ENCODE measurements at regions of chrX and their contacts with region 1.

Region 1: GRCh38 chrX:40108959-40109287 is 11.2 kb upstream of the BCOR start:
- DNase-seq: no peak
- H3K4me3 ChIP-seq: peak overlapping the region; percentile 45 to 64
- H3K27ac ChIP-seq: peak overlapping the region; percentile 71
- H3K4me1 ChIP-seq: peaks cover 35% of the 10 kb centered on the region
- H3K27me3 ChIP-seq: no peaks in the 10 kb centered on the region
- CTCF ChIP-seq: no peak
- POLR2A ChIP-seq: peak in 1 of 2 donors; percentile 3

Region 2: DNA sequence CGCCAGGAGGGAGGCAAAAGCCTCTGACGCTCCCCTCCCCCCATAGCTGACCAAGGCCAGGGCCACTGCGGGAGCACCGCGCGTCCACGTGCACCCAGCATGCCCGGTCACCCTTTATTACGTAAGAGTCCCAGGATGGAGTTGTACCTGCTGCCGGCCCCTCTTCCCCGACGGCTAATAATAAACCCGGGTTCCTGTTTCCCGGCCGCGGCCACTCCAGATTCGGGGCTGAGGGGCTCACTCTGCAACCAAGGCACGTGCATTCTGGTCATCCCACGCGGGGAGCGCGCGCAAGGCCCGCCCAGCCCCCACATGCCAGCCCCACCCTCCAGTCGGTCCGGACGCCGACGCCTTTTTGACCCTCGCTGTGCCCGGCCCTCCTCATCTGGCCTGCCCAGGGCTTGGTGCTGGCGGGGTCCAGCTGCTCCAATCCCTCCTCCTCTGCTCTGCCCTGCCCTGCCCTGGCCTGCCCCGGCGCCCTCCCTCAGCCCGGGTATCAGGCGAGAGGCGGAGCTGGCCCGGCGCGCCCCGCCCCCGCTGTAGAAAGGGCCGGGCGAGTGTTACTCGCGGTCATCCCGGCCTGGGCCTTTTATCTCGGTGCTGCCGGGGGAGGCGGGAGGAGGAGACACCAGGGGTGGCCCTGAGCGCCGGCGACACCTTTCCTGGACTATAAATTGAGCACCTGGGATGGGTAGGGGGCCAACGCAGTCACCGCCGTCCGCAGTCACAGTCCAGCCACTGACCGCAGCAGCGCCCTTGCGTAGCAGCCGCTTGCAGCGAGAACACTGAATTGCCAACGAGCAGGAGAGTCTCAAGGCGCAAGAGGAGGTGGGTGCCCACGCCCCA is 1305.1 kb before region 1 on chrX:
- intact Hi-C with region 1: loop called (anchors 10 kb)
- DNase-seq: no peak
- H3K4me3 ChIP-seq: peak overlapping the region; percentile 63 to 64
- H3K27ac ChIP-seq: peak overlapping the region; percentile 81
- H3K4me1 ChIP-seq: no peaks in the 10 kb centered on the region
- H3K27me3 ChIP-seq: no peaks in the 10 kb centered on the region
- CTCF ChIP-seq: no peak
- POLR2A ChIP-seq: peak in 1 of 2 donors; percentile 43

Region 3: DNA sequence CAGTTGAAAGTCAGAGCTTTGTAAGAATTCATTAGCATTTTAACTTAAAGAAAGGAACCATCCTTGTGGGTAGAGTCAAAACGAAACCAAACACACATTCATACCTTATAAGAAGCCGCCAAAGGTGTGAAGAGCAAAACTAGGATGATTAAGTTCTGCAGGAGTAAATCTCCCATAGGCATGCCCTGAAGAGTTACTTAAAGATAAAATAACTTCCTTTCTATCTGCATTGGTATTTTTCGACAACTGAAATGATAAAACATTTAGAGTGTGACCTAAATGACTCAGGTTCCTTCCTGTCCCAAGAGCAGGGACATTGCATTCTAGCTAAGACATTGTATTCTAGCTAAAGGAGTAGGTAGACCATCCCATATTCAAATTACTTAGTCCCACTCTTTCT is 86.5 kb before region 1 on chrX:
- intact Hi-C with region 1: no loop called
- DNase-seq: no peak
- H3K4me3 ChIP-seq: no peak overlapping the region
- H3K27ac ChIP-seq: no peak overlapping the region
- H3K4me1 ChIP-seq: no peaks in the 10 kb centered on the region
- H3K27me3 ChIP-seq: no peaks in the 10 kb centered on the region
- CTCF ChIP-seq: no peak
- POLR2A ChIP-seq: no peak

Region 4: GRCh38 chrX:41257801-41258200 is 1148.9 kb after region 1 on chrX:
- intact Hi-C with region 1: no loop called
- DNase-seq: no peak
- H3K4me3 ChIP-seq: no peak overlapping the region
- H3K27ac ChIP-seq: no peak overlapping the region
- H3K4me1 ChIP-seq: peaks cover 6% of the 10 kb centered on the region
- H3K27me3 ChIP-seq: no peaks in the 10 kb centered on the region
- CTCF ChIP-seq: no peak
- POLR2A ChIP-seq: no peak

Measured in vagina (tissue), 2 donors.